Caco-2 (cell line): ENCODE measurements at regions of chr11 and their contacts with region 1.

Region 1: GRCh38 chr11:119205574-119206510 is at the start of gene CBL:
- DNase-seq: peak; percentile 98 to 99
- H3K4me3 ChIP-seq: peak within 1 kb of the TSS; percentile 88
- H3K4me3 Mint-ChIP-seq: peak within 1 kb of the TSS; percentile 92
- H3K27ac Mint-ChIP-seq: peak within 1 kb of the TSS; percentile 87
- H3K4me1 ChIP-seq: peaks cover 37% of the 10 kb centered on the region
- H3K4me1 Mint-ChIP-seq: peaks cover 32% of the 10 kb centered on the region
- H3K27me3 ChIP-seq: no peaks in the 10 kb centered on the region
- H3K27me3 Mint-ChIP-seq: no peaks in the 10 kb centered on the region
- CTCF ChIP-seq: peak; percentile 98 to 99
- total RNA-seq, gene CBL: 52.7 and 53.5 TPM in 2 replicates

Region 2: DNA sequence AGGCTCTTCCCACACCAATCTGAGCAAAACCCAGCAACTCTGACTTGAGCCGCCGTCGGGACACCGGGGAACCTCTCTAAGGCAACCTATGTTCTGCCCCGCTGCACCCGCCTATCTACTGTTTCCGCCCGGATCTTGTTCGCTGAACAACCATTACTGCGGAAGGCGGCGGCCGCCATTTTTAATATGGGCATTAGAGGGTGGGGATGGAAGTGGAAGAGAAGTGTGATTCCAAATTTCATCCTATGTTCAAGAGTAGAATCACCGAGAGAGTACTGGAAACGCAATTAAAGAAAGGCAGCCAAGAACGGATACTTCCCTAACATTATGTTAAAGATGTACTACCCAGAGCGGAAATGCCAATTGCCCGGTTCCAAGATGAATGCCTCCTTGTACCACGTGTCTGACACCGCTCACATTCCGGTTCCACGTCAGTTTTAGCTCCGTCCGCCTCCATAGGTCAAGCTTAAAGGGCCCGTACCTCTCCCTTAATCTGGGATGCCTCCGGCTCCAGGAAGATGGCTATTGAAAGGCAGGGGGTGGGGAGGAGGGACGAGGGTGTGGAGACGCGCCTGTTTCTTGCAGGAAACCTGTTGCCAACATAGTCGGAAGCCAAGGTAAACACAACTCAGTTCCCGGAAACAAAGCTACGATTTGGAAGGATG is 104.0 kb before region 1 on chr11 and contains the start of gene DPAGT1:
- CTCF ChIA-PET with region 1: interaction called, 11 read pairs
- POLR2A ChIA-PET with region 1: interaction called, 18 read pairs
- intact Hi-C with region 1: no loop called
- DNase-seq: peak; percentile 97 to 99
- H3K4me3 ChIP-seq: peak within 1 kb of the TSS; percentile 43
- H3K4me3 Mint-ChIP-seq: peak within 1 kb of the TSS; percentile 85
- H3K27ac Mint-ChIP-seq: peak within 1 kb of the TSS; percentile 98
- H3K4me1 ChIP-seq: peaks cover 24% of the 10 kb centered on the region
- H3K4me1 Mint-ChIP-seq: peaks cover 29% of the 10 kb centered on the region
- H3K27me3 ChIP-seq: no peaks in the 10 kb centered on the region
- H3K27me3 Mint-ChIP-seq: no peaks in the 10 kb centered on the region
- CTCF ChIP-seq: peak in 1 of 2 experiments; percentile 8
- total RNA-seq, gene DPAGT1: 117 and 119 TPM in 2 replicates

Region 3: DNA sequence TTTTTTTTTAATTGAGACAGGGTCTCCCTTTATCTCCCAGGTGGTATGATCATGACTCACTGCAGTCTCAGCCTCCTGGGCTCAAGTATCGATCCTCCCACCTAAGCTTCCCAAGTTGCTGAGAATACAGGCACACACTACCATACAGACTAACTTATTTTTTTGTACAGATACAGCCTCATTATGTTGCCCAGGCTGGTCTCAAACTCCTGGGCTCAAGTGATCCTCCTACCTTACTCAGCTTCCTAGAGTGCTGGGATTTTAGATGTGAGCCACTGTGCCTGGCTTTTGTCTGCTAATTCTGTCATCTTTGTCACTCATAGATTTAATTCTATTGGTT is 43.8 kb after region 1 on chr11:
- CTCF ChIA-PET with region 1: interaction called, 11 read pairs
- POLR2A ChIA-PET with region 1: no interaction called
- intact Hi-C with region 1: no loop called
- DNase-seq: no peak
- H3K4me3 ChIP-seq: no peak overlapping the region
- H3K4me3 Mint-ChIP-seq: no peak overlapping the region
- H3K27ac Mint-ChIP-seq: no peak overlapping the region
- H3K4me1 ChIP-seq: peaks cover 10% of the 10 kb centered on the region
- H3K4me1 Mint-ChIP-seq: peaks cover 6% of the 10 kb centered on the region
- H3K27me3 ChIP-seq: no peaks in the 10 kb centered on the region
- H3K27me3 Mint-ChIP-seq: no peaks in the 10 kb centered on the region
- CTCF ChIP-seq: no peak

Region 4: GRCh38 chr11:119315131-119316015 is 109.5 kb after region 1 on chr11:
- CTCF ChIA-PET with region 1: interaction called, 10 read pairs
- POLR2A ChIA-PET with region 1: interaction called, 3 read pairs
- intact Hi-C with region 1: loop called (anchors 10 kb)
- DNase-seq: peak; percentile 53 to 58
- H3K4me3 ChIP-seq: peak overlapping the region; percentile 8; the same call in 1 of the 2 replicates
- H3K4me3 Mint-ChIP-seq: peak overlapping the region; percentile 76
- H3K27ac Mint-ChIP-seq: no peak overlapping the region
- H3K4me1 ChIP-seq: peaks cover 23% of the 10 kb centered on the region
- H3K4me1 Mint-ChIP-seq: no peaks in the 10 kb centered on the region
- H3K27me3 ChIP-seq: peaks cover 7% of the 10 kb centered on the region
- H3K27me3 Mint-ChIP-seq: peaks cover 5% of the 10 kb centered on the region
- CTCF ChIP-seq: peak in 1 of 2 experiments; percentile 21

Region 5: GRCh38 chr11:119363851-119364590 is 158.2 kb after region 1 on chr11:
- CTCF ChIA-PET with region 1: interaction called, 11 read pairs
- POLR2A ChIA-PET with region 1: interaction called, 3 read pairs
- intact Hi-C with region 1: no loop called
- DNase-seq: peak in 1 of 2 experiments; percentile 92
- H3K4me3 ChIP-seq: peak overlapping the region; percentile 64
- H3K4me3 Mint-ChIP-seq: peak overlapping the region; percentile 77
- H3K27ac Mint-ChIP-seq: peak overlapping the region; percentile 67
- H3K4me1 ChIP-seq: peaks cover 75% of the 10 kb centered on the region
- H3K4me1 Mint-ChIP-seq: peaks cover 68% of the 10 kb centered on the region
- H3K27me3 ChIP-seq: no peaks in the 10 kb centered on the region
- H3K27me3 Mint-ChIP-seq: no peaks in the 10 kb centered on the region
- CTCF ChIP-seq: no peak